ENCODE measurements at regions of chr6 and their contacts with region 1.

Region 1: GRCh38 chr6:14066782-14067406 is 50.7 kb upstream of the CD83 start:
- DNase-seq: peak in 7 of 9 donors; percentile 32 to 56 (median 43)
- ATAC-seq: peak; percentile 90
- H3K4me3 ChIP-seq: no peak overlapping the region
- H3K4me3 Mint-ChIP-seq: no peak overlapping the region
- H3K27ac ChIP-seq: no peak overlapping the region
- H3K27ac Mint-ChIP-seq: peak overlapping the region in 1 of 9 donors; percentile 82
- H3K4me1 ChIP-seq: no peaks in the 10 kb centered on the region
- H3K4me1 Mint-ChIP-seq: peaks cover 0 to 21% (median 0%) of the 10 kb centered on the region in 7 donors
- H3K27me3 ChIP-seq: no peaks in the 10 kb centered on the region
- H3K27me3 Mint-ChIP-seq: peaks cover 0 to 18% (median 14%) of the 10 kb centered on the region in 5 donors

Region 2: GRCh38 chr6:12637960-12638641 is 1428.8 kb before region 1 on chr6:
- CTCF ChIA-PET with region 1: no interaction called
- POLR2A ChIA-PET with region 1: no interaction called
- intact Hi-C with region 1: loop called in 1 of 2 experiments (anchors 10 kb)
- DNase-seq: peak in 2 of 9 donors; percentile 3 to 37
- ATAC-seq: peak; percentile 65
- H3K4me3 ChIP-seq: no peak overlapping the region
- H3K4me3 Mint-ChIP-seq: no peak overlapping the region
- H3K27ac ChIP-seq: no peak overlapping the region
- H3K27ac Mint-ChIP-seq: no peak overlapping the region
- H3K4me1 ChIP-seq: no peaks in the 10 kb centered on the region
- H3K4me1 Mint-ChIP-seq: peaks cover 0 to 3% (median 0%) of the 10 kb centered on the region in 7 donors
- H3K27me3 ChIP-seq: no peaks in the 10 kb centered on the region
- H3K27me3 Mint-ChIP-seq: peaks cover 15 to 54% (median 45%) of the 10 kb centered on the region in 5 donors

Region 3: GRCh38 chr6:13336553-13336952 is 730.3 kb before region 1 on chr6:
- CTCF ChIA-PET with region 1: no interaction called
- POLR2A ChIA-PET with region 1: no interaction called
- intact Hi-C with region 1: loop called (anchors 1 to 2 kb)
- DNase-seq: peak; percentile 39 to 80 (median 60)
- ATAC-seq: peak; percentile 83
- H3K4me3 ChIP-seq: no peak overlapping the region
- H3K4me3 Mint-ChIP-seq: peak overlapping the region in 1 of 10 donors; percentile 14
- H3K27ac ChIP-seq: no peak overlapping the region
- H3K27ac Mint-ChIP-seq: no peak overlapping the region
- H3K4me1 ChIP-seq: no peaks in the 10 kb centered on the region
- H3K4me1 Mint-ChIP-seq: peaks cover 3 to 42% (median 8%) of the 10 kb centered on the region in 7 donors
- H3K27me3 ChIP-seq: no peaks in the 10 kb centered on the region
- H3K27me3 Mint-ChIP-seq: peaks cover 0 to 2% (median 0%) of the 10 kb centered on the region in 5 donors

Region 4: GRCh38 chr6:13873285-13874190 is 193.4 kb before region 1 on chr6:
- CTCF ChIA-PET with region 1: interaction called, 6 read pairs
- POLR2A ChIA-PET with region 1: no interaction called
- intact Hi-C with region 1: loop called (anchors 1 to 2 kb)
- DNase-seq: peak; percentile 41 to 75 (median 66)
- ATAC-seq: peak; percentile 88
- H3K4me3 ChIP-seq: peak overlapping the region; percentile 59
- H3K4me3 Mint-ChIP-seq: peak overlapping the region; percentile 76 to 92 (median 85)
- H3K27ac ChIP-seq: peak overlapping the region; percentile 2
- H3K27ac Mint-ChIP-seq: peak overlapping the region in 5 of 9 donors; percentile 3 to 60 (median 38)
- H3K4me1 ChIP-seq: peaks cover 0 to 4% of the 10 kb centered on the region in 2 donors
- H3K4me1 Mint-ChIP-seq: peaks cover 9 to 20% (median 17%) of the 10 kb centered on the region in 7 donors
- H3K27me3 ChIP-seq: no peaks in the 10 kb centered on the region
- H3K27me3 Mint-ChIP-seq: peaks cover 2 to 14% (median 7%) of the 10 kb centered on the region in 5 donors

Region 5: GRCh38 chr6:13979284-13980171 is 87.4 kb before region 1 on chr6:
- CTCF ChIA-PET with region 1: no interaction called
- POLR2A ChIA-PET with region 1: no interaction called
- intact Hi-C with region 1: no loop called
- DNase-seq: no peak
- ATAC-seq: no peak
- H3K4me3 ChIP-seq: no peak overlapping the region
- H3K4me3 Mint-ChIP-seq: no peak overlapping the region
- H3K27ac ChIP-seq: no peak overlapping the region
- H3K27ac Mint-ChIP-seq: no peak overlapping the region
- H3K4me1 ChIP-seq: no peaks in the 10 kb centered on the region
- H3K4me1 Mint-ChIP-seq: no peaks in the 10 kb centered on the region
- H3K27me3 ChIP-seq: peaks cover 0 to 3% of the 10 kb centered on the region in 2 donors
- H3K27me3 Mint-ChIP-seq: peaks cover 38 to 60% (median 54%) of the 10 kb centered on the region in 5 donors

Region 6: GRCh38 chr6:14001329-14002012 is 65.4 kb before region 1 on chr6:
- CTCF ChIA-PET with region 1: no interaction called
- POLR2A ChIA-PET with region 1: no interaction called
- intact Hi-C with region 1: no loop called
- DNase-seq: no peak
- ATAC-seq: no peak
- H3K4me3 ChIP-seq: no peak overlapping the region
- H3K4me3 Mint-ChIP-seq: no peak overlapping the region
- H3K27ac ChIP-seq: no peak overlapping the region
- H3K27ac Mint-ChIP-seq: no peak overlapping the region
- H3K4me1 ChIP-seq: no peaks in the 10 kb centered on the region
- H3K4me1 Mint-ChIP-seq: no peaks in the 10 kb centered on the region
- H3K27me3 ChIP-seq: no peaks in the 10 kb centered on the region
- H3K27me3 Mint-ChIP-seq: peaks cover 9 to 28% (median 20%) of the 10 kb centered on the region in 5 donors

Region 7: DNA sequence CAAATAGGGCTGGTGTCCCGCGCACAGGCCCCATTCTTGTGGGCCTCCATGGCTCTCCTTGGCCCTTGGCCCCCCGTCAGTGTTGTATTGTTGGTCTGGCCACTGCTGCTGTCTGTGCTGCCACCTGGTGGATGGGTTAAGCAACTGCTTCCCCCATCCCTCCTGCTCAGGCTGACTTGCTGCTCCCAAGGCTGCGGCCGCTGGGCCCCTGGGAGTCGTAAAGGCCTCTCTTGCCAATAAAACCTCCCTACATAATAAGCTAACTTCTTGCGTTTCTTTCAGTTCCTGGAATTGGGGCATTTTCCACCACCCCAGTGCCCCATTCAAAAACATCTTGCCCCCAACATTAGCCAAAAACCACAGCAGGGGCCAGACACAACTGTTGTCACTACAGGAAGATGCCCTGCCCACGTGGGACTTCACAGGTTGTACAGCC is 77.8 kb after region 1 on chr6:
- CTCF ChIA-PET with region 1: interaction called, 3 read pairs
- POLR2A ChIA-PET with region 1: no interaction called
- intact Hi-C with region 1: loop called (anchors 2 to 5 kb)
- DNase-seq: peak; percentile 45 to 76 (median 62)
- ATAC-seq: peak; percentile 91
- H3K4me3 ChIP-seq: no peak overlapping the region
- H3K4me3 Mint-ChIP-seq: no peak overlapping the region
- H3K27ac ChIP-seq: no peak overlapping the region
- H3K27ac Mint-ChIP-seq: no peak overlapping the region
- H3K4me1 ChIP-seq: no peaks in the 10 kb centered on the region
- H3K4me1 Mint-ChIP-seq: peaks cover 0 to 12% (median 2%) of the 10 kb centered on the region in 7 donors
- H3K27me3 ChIP-seq: no peaks in the 10 kb centered on the region
- H3K27me3 Mint-ChIP-seq: no peaks in the 10 kb centered on the region

Measured in naive thymus-derived CD4-positive, alpha-beta T cell (primary cell).